Activated T-helper 2 cell treated with anti-CD3 and anti-CD28 coated beads, Interferon-gamma antibody, Interleukin-2, Interleukin-4, amounts not matched to agents 10 μg/mL and 5 μg/mL and 100 μg/mL, durations not matched to agents 14 hours and 24 hours and 36 hours (primary cell): ENCODE measurements at regions of chr2 and their contacts with region 1.

Region 1: GRCh38 chr2:178414266-178415247 is 36.4 kb downstream of the PRKRA start:
- DNase-seq: peak; percentile 80
- H3K4me3 Mint-ChIP-seq: peak overlapping the region; percentile 94
- H3K27ac Mint-ChIP-seq: peak overlapping the region; percentile 98
- H3K4me1 Mint-ChIP-seq: peaks cover 50% of the 10 kb centered on the region
- H3K27me3 Mint-ChIP-seq: no peaks in the 10 kb centered on the region

Region 2: DNA sequence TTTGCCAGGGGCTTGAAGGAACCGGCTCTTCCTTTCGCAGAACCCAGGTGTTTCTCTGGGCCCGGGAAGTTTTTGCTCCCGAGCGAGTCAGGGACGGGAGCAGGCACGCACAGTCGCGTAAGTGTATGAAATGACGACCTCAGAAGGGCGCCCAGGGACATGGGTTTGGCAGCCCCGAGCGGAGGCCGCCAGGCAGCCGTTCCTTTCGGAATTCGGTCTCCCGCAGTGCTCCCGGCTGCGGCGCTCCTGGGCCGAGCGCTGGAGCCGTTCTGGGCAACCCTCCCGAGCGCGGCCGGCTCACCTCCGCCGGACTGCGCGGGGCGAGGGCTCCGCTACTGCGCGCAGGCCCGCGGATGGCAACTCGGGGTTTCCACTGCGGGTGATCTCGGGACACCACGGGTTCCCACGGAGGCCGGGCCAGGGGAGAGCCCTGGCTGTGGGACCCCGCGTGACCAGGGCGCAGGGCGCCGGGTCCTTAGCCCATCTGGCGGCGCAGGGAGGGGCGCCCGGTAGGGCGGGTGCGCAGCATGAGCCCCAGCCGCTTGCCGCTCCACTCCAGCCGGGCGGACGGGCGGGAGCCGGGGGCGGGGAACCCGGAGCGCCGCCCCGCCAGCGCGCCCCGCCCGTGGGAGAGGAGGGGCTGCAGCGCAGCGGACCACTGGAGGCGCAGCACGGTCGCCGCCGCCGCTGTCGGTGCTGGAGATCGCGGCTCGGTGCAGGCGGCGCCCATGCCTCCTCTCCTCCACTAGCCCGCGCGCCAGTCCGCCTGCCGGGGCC is 220.5 kb before region 1 on chr2 and contains the start of gene OSBPL6:
- intact Hi-C with region 1: loop called (anchors 10 kb)
- DNase-seq: peak; percentile 69
- H3K4me3 Mint-ChIP-seq: peak within 1 kb of the TSS; percentile 71
- H3K27ac Mint-ChIP-seq: no peak within 1 kb of the TSS
- H3K4me1 Mint-ChIP-seq: peaks cover 15% of the 10 kb centered on the region
- H3K27me3 Mint-ChIP-seq: peaks cover 59% of the 10 kb centered on the region
- total RNA-seq, gene OSBPL6: 1.8 and 2.3 TPM in 2 replicates

Region 3: DNA sequence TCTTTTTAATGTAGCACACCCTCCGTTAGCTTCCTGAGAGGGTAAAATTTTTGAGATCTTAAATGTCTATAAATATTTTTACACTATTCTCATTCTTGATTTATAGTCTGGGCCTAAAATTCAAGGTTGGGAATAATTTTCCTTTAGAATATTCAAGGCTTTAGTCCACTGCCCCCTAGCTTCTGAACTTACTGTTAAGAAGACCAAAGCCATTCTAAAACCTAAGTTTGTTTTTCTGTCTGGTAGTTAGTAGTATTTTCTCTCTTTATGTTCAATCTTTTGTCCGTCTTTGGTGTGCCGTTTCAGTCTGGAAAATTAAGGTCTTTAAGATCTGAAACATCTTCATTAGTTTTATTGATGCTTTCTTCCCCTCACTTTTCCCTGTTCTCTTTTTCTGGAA is 205.7 kb before region 1 on chr2:
- intact Hi-C with region 1: no loop called
- DNase-seq: no peak
- H3K4me3 Mint-ChIP-seq: no peak overlapping the region
- H3K27ac Mint-ChIP-seq: no peak overlapping the region
- H3K4me1 Mint-ChIP-seq: no peaks in the 10 kb centered on the region
- H3K27me3 Mint-ChIP-seq: peaks cover 30% of the 10 kb centered on the region

Region 4: DNA sequence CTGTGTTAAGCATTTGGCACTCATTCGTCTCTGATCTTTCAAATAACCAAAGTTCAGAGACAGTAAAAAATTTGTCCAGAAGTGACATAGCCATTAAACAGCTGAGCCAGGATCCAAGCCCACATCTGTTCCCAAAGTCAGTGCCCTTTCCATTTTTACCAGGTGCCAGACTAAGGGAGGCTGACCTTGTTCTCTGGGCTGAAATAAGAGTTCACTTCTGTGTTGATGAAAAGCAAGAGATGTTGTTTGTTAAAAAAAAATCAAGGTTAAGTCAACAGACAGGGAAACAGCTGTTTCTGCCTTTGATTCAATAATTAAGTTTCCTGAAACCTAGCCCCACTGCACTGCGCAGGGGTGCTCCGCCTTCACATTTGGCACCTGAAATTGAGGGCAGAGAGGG is 80.7 kb before region 1 on chr2:
- intact Hi-C with region 1: no loop called
- DNase-seq: no peak
- H3K4me3 Mint-ChIP-seq: no peak overlapping the region
- H3K27ac Mint-ChIP-seq: no peak overlapping the region
- H3K4me1 Mint-ChIP-seq: no peaks in the 10 kb centered on the region
- H3K27me3 Mint-ChIP-seq: peaks cover 4% of the 10 kb centered on the region

Region 5: GRCh38 chr2:178380763-178381162 is 33.8 kb before region 1 on chr2:
- intact Hi-C with region 1: loop called (anchors 1 kb)
- DNase-seq: no peak
- H3K4me3 Mint-ChIP-seq: no peak overlapping the region
- H3K27ac Mint-ChIP-seq: no peak overlapping the region
- H3K4me1 Mint-ChIP-seq: peaks cover 15% of the 10 kb centered on the region
- H3K27me3 Mint-ChIP-seq: peaks cover 6% of the 10 kb centered on the region

Region 6: DNA sequence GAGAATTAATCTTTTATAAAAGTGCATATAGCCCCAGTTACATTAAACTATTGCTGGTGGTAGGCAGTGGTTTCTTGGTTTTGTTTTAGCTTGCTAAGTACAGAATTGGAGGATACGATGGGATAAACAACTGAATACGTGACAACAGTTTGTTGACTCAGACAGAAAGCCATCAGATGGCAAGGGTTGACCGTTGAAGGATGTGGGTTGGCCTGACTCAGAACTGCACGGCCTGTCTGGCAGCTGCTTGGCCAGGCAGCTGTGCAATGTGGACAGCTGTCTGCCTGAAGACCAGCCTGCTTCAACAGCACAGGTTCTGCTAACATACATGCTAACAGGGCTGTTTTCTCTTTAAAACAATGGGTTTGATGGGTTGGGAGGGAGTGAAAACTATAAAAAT is 10.2 kb before region 1 on chr2:
- intact Hi-C with region 1: loop called (anchors 1 kb)
- DNase-seq: peak; percentile 50
- H3K4me3 Mint-ChIP-seq: peak overlapping the region; percentile 60
- H3K27ac Mint-ChIP-seq: peak overlapping the region; percentile 93
- H3K4me1 Mint-ChIP-seq: peaks cover 36% of the 10 kb centered on the region
- H3K27me3 Mint-ChIP-seq: peaks cover 5% of the 10 kb centered on the region

Region 7: DNA sequence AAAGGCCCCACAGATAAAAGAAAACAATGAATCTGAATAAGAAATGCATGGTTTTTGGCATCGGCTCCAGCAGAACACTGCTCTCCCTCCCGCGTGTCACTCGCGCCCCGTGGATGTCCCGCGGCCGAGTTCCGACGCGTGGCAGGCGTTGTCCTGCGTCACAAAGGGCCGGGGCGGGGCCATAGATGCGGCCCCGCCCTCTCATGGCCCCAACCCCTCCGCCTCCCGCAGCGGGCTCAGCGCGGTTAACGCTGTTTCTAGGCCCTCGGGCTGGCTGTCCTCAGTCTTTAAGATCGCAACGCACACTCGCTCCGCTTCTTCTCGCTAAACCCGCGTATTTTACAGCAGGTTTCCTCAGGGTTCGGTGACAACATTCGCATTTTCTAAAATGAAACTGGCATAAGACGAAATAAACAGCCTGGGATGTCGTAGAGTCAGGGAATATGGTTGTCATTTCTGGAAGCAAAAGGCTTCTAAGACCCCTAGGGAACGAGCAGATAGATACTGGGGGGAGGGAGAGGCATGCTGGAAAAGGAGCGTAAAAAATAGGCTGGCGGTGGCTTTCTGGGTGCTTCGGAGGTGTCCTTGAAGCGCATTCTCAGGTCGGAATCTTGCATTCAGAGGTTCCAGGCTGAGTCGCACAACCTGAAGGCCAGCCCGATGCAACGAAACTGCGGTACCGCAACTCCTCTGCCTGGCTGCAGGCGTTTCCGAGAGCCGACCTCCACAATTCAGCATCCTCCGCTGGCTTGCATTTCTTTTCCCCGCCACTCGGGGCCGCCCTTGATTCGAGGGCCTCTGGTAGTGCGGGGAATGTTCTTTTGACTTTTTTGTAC is 64.1 kb after region 1 on chr2 and contains the start of gene FKBP7:
- intact Hi-C with region 1: loop called (anchors 1 kb)
- DNase-seq: peak; percentile 74
- H3K4me3 Mint-ChIP-seq: peak within 1 kb of the TSS; percentile 90
- H3K27ac Mint-ChIP-seq: peak within 1 kb of the TSS; percentile 92
- H3K4me1 Mint-ChIP-seq: peaks cover 36% of the 10 kb centered on the region
- H3K27me3 Mint-ChIP-seq: no peaks in the 10 kb centered on the region
- total RNA-seq, gene FKBP7: 3.2 and 6.6 TPM in 2 replicates